CD8-positive, alpha-beta T cell (primary cell): ENCODE measurements at regions of chr3 and their contacts with region 1.

Region 1: GRCh38 chr3:187112934-187113793 is 26.1 kb downstream of the RPL39L start:
- DNase-seq: peak in 2 of 9 experiments; percentile 61 to 70
- ATAC-seq: peak; percentile 58
- H3K4me3 ChIP-seq: no peak overlapping the region
- H3K4me3 Mint-ChIP-seq: no peak overlapping the region
- H3K27ac ChIP-seq: no peak overlapping the region
- H3K27ac Mint-ChIP-seq: no peak overlapping the region
- H3K4me1 ChIP-seq: no peaks in the 10 kb centered on the region
- H3K4me1 Mint-ChIP-seq: peaks cover 7% of the 10 kb centered on the region
- H3K27me3 ChIP-seq: no peaks in the 10 kb centered on the region
- H3K27me3 Mint-ChIP-seq: no peaks in the 10 kb centered on the region
- CTCF ChIP-seq: peak; percentile 81

Region 2: GRCh38 chr3:187066228-187066995 is 46.8 kb before region 1 on chr3:
- CTCF ChIA-PET with region 1: interaction called, 11 read pairs
- POLR2A ChIA-PET with region 1: no interaction called
- intact Hi-C with region 1: no loop called
- DNase-seq: peak; percentile 15 to 80 (median 54)
- ATAC-seq: peak; percentile 92
- H3K4me3 ChIP-seq: no peak overlapping the region
- H3K4me3 Mint-ChIP-seq: no peak overlapping the region
- H3K27ac ChIP-seq: no peak overlapping the region
- H3K27ac Mint-ChIP-seq: peak overlapping the region; percentile 94
- H3K4me1 ChIP-seq: peaks cover 35% of the 10 kb centered on the region
- H3K4me1 Mint-ChIP-seq: peaks cover 64% of the 10 kb centered on the region
- H3K27me3 ChIP-seq: no peaks in the 10 kb centered on the region
- H3K27me3 Mint-ChIP-seq: no peaks in the 10 kb centered on the region
- CTCF ChIP-seq: peak; percentile 44

Region 3: GRCh38 chr3:187125319-187126031 is 12.3 kb after region 1 on chr3:
- CTCF ChIA-PET with region 1: interaction called, 27 read pairs
- POLR2A ChIA-PET with region 1: interaction called, 3 read pairs
- intact Hi-C with region 1: no loop called
- DNase-seq: no peak
- ATAC-seq: no peak
- H3K4me3 ChIP-seq: no peak overlapping the region
- H3K4me3 Mint-ChIP-seq: no peak overlapping the region
- H3K27ac ChIP-seq: no peak overlapping the region
- H3K27ac Mint-ChIP-seq: no peak overlapping the region
- H3K4me1 ChIP-seq: peaks cover 8% of the 10 kb centered on the region
- H3K4me1 Mint-ChIP-seq: peaks cover 12% of the 10 kb centered on the region
- H3K27me3 ChIP-seq: no peaks in the 10 kb centered on the region
- H3K27me3 Mint-ChIP-seq: no peaks in the 10 kb centered on the region
- CTCF ChIP-seq: no peak

Region 4: GRCh38 chr3:187145149-187145895 is 32.2 kb after region 1 on chr3:
- CTCF ChIA-PET with region 1: interaction called, 112 read pairs
- POLR2A ChIA-PET with region 1: no interaction called
- intact Hi-C with region 1: loop called (anchors 1 to 2 kb)
- DNase-seq: no peak
- ATAC-seq: no peak
- H3K4me3 ChIP-seq: no peak overlapping the region
- H3K4me3 Mint-ChIP-seq: no peak overlapping the region
- H3K27ac ChIP-seq: no peak overlapping the region
- H3K27ac Mint-ChIP-seq: no peak overlapping the region
- H3K4me1 ChIP-seq: no peaks in the 10 kb centered on the region
- H3K4me1 Mint-ChIP-seq: no peaks in the 10 kb centered on the region
- H3K27me3 ChIP-seq: no peaks in the 10 kb centered on the region
- H3K27me3 Mint-ChIP-seq: no peaks in the 10 kb centered on the region
- CTCF ChIP-seq: no peak

Region 5: DNA sequence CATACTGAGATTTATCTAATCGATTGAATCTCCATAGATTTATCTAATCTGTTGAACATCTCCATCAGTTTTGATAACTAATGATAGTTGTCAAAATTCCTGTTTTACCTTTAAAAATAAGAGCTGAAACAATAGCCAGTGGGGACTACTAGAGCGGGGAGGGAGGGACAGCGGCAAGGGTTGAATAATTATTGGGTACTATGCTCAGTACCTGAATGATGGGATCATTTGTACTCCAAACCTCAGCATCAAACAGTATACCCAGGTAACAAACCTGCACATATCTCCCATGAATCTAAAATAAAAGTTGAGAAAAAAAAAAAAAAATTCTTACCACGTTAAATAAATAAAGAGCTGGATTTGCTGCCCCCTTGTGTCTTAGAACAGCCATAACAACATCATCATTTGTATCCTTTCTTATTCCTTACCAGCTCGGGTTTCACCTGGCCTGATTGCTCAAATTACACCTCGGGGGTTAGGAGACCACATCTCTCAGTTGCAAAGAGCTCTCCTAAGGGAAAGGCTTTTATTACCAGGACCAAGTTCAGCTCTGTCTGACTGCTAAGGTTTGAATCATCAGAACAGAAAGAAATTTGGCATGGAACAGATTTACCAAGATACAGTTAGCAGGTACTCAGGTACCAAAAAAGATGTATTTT is 51.9 kb after region 1 on chr3:
- CTCF ChIA-PET with region 1: interaction called, 210 read pairs
- POLR2A ChIA-PET with region 1: interaction called, 11 read pairs
- intact Hi-C with region 1: loop called (anchors 1 kb)
- DNase-seq: peak in 6 of 9 experiments; percentile 8 to 83 (median 38)
- ATAC-seq: peak; percentile 77
- H3K4me3 ChIP-seq: no peak overlapping the region
- H3K4me3 Mint-ChIP-seq: no peak overlapping the region
- H3K27ac ChIP-seq: no peak overlapping the region
- H3K27ac Mint-ChIP-seq: no peak overlapping the region
- H3K4me1 ChIP-seq: no peaks in the 10 kb centered on the region
- H3K4me1 Mint-ChIP-seq: peaks cover 3% of the 10 kb centered on the region
- H3K27me3 ChIP-seq: peaks cover 0 to 3% of the 10 kb centered on the region in 2 experiments
- H3K27me3 Mint-ChIP-seq: no peaks in the 10 kb centered on the region
- CTCF ChIP-seq: peak; percentile 90

Region 6: GRCh38 chr3:187227658-187228258 is 114.6 kb after region 1 on chr3:
- CTCF ChIA-PET with region 1: no interaction called
- POLR2A ChIA-PET with region 1: no interaction called
- intact Hi-C with region 1: no loop called
- DNase-seq: no peak
- ATAC-seq: no peak
- H3K4me3 ChIP-seq: no peak overlapping the region
- H3K4me3 Mint-ChIP-seq: no peak overlapping the region
- H3K27ac ChIP-seq: no peak overlapping the region
- H3K27ac Mint-ChIP-seq: no peak overlapping the region
- H3K4me1 ChIP-seq: no peaks in the 10 kb centered on the region
- H3K4me1 Mint-ChIP-seq: no peaks in the 10 kb centered on the region
- H3K27me3 ChIP-seq: peaks cover 0 to 2% of the 10 kb centered on the region in 2 experiments
- H3K27me3 Mint-ChIP-seq: peaks cover 15% of the 10 kb centered on the region
- CTCF ChIP-seq: no peak